ENCODE measurements at regions of chr6 and their contacts with region 1.

Region 1: GRCh38 chr6:159862103-159862502 is 28.7 kb upstream of the MAS1 start:
- DNase-seq: no peak
- ATAC-seq: no peak
- H3K4me3 Mint-ChIP-seq: no peak overlapping the region
- H3K27ac Mint-ChIP-seq: no peak overlapping the region
- H3K4me1 Mint-ChIP-seq: no peaks in the 10 kb centered on the region
- H3K27me3 Mint-ChIP-seq: no peaks in the 10 kb centered on the region
- CTCF ChIP-seq: no peak

Region 2: DNA sequence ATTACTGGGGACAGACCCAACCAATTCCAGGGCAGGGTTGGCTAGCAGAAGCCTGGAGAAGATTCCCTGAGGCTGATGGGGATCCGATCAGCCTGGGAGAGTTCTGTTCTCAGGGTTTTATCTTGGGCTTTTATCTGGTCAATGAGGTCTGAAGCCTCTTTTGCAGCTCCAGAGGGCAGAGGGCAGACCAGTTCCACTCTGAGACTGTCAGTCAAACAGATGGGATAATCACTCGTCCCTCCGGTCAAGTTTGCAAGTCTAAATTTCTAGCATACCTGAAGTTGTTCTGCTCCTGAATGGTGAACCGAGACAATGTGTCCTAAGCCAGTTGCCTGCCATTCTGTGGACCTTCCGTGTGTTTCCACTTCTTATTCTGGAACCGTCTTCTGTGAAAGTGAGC is 25.7 kb after region 1 on chr6:
- CTCF ChIA-PET with region 1: interaction called, 12 read pairs
- POLR2A ChIA-PET with region 1: no interaction called
- DNase-seq: no peak
- ATAC-seq: no peak
- H3K4me3 Mint-ChIP-seq: no peak overlapping the region
- H3K27ac Mint-ChIP-seq: no peak overlapping the region
- H3K4me1 Mint-ChIP-seq: peaks cover 4% of the 10 kb centered on the region; the same call in 1 of the 2 replicates
- H3K27me3 Mint-ChIP-seq: no peaks in the 10 kb centered on the region; the same call in 1 of the 2 replicates
- CTCF ChIP-seq: no peak

Measured in WTC11 (cell line).